ENCODE measurements at regions of chr3 and their contacts with region 1.

Region 1: DNA sequence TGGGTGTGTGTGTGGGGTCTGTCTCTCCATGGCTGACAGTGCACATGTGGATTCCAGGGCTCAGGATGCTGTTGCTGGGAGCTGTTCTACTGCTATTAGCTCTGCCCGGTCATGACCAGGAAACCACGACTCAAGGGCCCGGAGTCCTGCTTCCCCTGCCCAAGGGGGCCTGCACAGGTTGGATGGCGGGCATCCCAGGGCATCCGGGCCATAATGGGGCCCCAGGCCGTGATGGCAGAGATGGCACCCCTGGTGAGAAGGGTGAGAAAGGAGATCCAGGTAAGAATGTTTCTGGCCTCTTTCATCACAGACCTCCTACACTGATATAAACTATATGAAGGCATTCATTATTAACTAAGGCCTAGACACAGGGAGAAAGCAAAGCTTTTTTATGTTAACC is 10.5 kb downstream of the ADIPOQ start:
- DNase-seq: no peak
- H3K4me3 ChIP-seq: no peak overlapping the region
- H3K27ac ChIP-seq: no peak overlapping the region
- H3K4me1 ChIP-seq: no peaks in the 10 kb centered on the region
- H3K27me3 ChIP-seq: no peaks in the 10 kb centered on the region
- CTCF ChIP-seq: no peak
- EP300 ChIP-seq: no peak
- POLR2A ChIP-seq: no peak

Region 2: GRCh38 chr3:187164885-187165543 is 312.0 kb after region 1 on chr3:
- intact Hi-C with region 1: loop called in 2 of 4 experiments (anchors 5 to 10 kb)
- DNase-seq: peak in 1 of 5 donors; percentile 19
- H3K4me3 ChIP-seq: no peak overlapping the region
- H3K27ac ChIP-seq: no peak overlapping the region
- H3K4me1 ChIP-seq: peaks cover 1% of the 10 kb centered on the region
- H3K27me3 ChIP-seq: no peaks in the 10 kb centered on the region
- CTCF ChIP-seq: peak; percentile 27 to 37 (median 27)
- EP300 ChIP-seq: no peak
- POLR2A ChIP-seq: no peak